Left ventricle myocardium superior (tissue), 1 donor: ENCODE measurements at regions of chr12 and their contacts with region 1.

Region 1: DNA sequence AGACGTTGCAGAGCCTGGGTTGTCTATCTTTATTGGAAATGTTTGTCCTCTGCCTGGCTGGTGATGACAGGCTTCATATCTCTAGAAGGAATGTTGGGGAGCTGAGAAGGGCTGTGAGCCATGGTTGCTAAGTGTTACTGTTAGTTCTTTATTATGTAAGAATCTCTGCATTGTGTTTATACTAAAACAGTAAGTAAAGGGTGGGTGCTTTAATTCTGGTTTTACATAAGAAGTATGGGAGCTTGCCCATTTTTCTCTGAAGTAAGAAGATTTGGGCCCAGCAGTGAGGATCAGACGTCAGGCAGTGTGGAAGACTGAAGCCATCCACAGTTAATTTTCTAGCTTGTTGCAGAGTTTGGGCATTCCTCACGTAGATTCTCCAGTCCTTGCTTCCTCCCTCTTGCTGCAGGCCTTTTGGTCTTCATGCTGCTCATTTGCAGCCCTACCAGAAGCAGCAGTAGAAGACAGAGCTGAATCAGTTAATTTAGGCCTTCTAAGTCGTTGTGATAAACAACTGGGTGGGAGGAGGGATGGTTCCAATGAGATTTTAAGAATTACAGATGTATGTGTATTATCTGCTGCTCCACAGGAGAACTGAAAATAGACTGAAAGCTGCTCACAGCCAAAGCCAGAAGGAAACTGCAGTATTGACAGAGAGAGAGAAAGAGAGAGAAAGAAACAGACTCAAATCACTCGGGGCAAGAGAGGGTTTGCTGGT is 21.4 kb downstream of the WNT5B start:
- DNase-seq: no peak
- ATAC-seq: peak; percentile 87

Region 2: GRCh38 chr12:1791104-1791841 is 140.9 kb after region 1 on chr12:
- intact Hi-C with region 1: loop called (anchors 5 kb)
- DNase-seq: peak; percentile 68
- ATAC-seq: peak; percentile 25